ENCODE measurements at regions of chr7 and their contacts with region 1.

Region 1: DNA sequence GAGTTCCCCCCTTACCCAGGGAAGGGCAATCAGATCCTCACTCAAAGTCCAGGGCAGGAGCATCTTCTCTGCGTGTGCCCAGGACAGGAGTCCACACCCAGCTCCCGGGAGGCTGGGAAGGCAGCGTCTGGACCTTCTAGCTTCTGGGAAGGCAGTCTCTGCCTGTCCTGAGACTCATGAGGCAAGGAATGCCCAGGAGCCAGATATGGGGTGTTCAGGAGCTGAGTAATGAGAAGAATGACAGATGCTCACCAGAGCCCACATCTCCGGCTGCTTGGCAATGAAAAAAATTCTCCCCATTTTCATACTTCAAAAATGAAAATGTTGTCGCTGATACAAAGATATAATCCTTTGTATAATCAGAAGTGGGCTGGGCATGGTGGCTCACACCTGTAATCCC is 41.5 kb downstream of the SMKR1 start:
- DNase-seq: no peak
- H3K4me3 ChIP-seq: no peak overlapping the region
- H3K27ac ChIP-seq: no peak overlapping the region
- H3K27me3 ChIP-seq: peaks cover 8% of the 10 kb centered on the region
- CTCF ChIP-seq: no peak

Region 2: DNA sequence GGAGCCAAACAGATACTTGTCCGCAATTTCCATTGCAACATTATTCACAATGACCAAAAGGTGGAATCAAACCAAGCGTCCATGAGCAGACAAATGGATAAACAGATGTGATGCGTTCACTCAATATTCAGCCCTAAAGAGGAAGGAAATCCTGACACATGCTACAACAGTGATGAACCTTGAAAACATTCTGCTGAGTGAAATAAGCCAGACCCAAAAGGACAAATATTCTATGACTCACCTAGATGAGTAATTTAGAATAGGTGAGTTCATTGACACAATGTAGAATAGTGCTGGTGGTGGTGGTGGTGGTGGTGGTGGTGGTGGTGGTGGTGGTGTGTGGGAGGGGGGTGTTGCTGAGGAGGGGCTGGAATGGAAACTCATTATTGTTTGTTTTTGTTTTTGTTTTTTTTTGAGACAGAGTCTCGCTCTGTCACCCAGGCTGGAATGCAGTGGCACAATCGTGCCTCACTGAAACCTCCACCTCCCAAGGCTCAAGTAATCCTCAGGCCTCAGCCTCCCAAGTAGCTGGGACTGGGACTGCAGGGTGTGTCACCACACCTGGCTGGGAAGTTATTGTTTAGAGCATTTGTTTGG is 12.9 kb before region 1 on chr7:
- CTCF ChIA-PET with region 1: no interaction called
- POLR2A ChIA-PET with region 1: interaction called, 16 read pairs
- DNase-seq: peak; percentile 16
- H3K4me3 ChIP-seq: no peak overlapping the region
- H3K27ac ChIP-seq: no peak overlapping the region
- H3K27me3 ChIP-seq: no peaks in the 10 kb centered on the region
- CTCF ChIP-seq: no peak

Measured in AG04450 (cell line).